KBM-7 (cell line): ENCODE measurements at regions of chr4 and their contacts with region 1.

Region 1: DNA sequence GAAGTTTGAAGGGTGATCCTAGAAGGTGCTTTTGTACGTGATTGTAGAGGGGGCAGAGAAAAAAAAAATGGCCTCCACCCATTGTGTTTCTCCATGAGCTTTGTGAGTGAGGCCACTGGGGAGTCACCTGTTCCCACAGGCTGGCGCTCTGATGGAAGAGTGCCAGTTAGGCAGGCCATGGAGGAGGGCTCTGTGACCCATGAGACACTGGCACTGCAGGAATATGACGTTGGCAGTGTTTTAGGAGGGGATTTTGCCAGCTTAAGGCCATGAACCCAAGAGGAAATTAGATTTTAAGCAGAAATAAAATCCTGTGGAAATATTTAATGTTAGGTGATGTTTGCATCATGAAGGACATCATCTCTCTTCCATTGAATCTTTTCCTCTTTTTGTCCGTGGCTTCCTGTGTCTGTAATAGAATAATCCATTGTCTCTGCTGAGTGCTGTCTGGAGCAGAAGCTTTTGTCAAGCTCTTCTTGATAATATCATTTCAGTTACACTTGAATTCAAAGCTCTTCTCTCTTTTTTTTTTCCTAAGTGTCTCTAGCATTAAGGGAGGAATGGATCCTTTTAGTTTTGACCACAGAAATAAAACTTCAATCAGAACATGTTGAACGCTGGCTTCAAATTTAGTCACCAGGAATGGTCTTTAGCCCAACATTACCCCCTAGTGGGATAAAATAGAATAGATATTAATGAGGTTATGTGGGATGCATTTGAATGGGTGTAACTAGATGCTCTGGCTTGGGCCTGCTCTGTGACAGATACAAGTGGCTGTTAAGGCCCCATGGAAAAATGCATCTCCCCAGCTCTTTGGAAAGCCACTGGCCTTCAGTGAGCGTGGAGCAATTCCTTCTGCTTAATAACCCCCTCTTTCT is 41.0 kb upstream of the UCP1 start:
- DNase-seq: peak; percentile 68

Region 2: GRCh38 chr4:140359562-140360427 is 250.0 kb before region 1 on chr4:
- in situ Hi-C with region 1: loop called (anchors 25 kb)
- DNase-seq: peak; percentile 91

Region 3: DNA sequence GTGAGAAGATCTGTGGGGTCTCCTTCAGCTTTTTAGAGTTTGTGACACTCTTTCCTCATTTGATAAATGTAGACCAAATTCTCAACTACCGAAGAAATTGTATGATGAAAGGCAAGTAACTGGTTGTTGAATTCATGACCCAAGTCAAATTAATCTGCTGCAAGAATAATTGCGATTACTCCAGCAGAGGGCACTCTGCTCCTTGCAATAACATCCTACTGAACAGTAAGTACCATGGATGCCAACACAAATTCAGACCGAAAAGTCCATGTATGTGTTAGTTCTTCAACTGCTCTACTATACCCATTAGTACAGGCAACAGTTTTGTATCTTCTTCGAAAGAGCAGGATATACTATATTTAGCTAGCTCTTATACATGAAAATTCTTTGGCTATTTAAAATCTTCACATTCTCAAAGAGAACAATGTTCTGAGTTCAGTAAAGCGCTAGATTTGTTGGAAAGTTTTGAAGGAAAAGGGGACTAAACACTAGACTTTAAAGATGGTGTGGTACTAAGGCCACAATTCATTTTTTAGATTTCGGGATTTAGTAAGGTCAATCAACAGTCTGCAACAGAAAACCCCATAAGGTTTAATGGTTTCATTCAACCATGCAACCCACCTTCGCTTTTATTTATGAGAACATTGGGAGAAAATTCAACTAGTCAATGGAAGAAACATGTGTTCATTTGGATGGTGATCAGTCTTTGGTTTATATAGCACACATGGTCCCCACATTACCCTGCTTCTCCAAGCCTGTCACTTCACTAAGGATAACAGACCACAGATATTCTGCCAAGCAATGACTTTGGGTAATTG is 251.8 kb after region 1 on chr4:
- in situ Hi-C with region 1: no loop called
- DNase-seq: peak; percentile 78